ENCODE measurements at regions of chr17 and their contacts with region 1.

Region 1: DNA sequence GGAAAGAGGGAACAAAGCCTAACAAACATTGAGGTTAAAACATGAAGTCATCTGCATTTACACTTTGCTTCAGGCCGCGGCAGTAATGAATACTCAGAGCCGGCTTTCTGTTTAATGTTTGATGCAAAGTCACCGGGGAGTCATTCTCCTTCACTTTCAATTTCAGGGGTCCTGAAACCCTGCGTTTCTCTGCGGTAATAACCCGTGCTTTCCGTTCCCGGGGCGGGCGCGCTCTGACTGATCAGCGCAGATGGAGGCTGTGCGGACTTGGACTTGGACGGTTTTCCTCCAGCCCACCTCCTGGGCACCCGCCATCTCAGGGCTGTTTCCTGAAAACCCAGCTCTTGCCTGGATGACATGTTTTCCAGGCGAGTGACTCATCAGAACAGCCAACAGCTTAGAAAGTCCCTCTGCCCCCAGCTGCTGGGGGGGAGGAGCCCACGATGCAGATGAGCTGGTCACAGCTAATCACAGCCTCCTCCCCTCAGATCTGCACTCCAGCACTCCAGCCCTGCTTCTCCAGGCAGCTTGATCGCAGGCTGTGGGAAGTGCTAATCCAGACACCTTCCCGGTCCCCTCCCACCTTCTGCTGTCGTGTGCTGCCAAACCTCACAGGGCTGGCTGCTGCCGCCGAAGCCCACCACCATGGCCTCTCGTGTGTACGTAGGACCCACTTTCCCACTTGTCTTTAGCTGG is 158.6 kb upstream of the CHMP6 start:
- DNase-seq: peak; percentile 43 to 87 (median 66)
- ATAC-seq: peak; percentile 92
- H3K4me3 ChIP-seq: peak overlapping the region; percentile 55
- H3K4me3 Mint-ChIP-seq: peak overlapping the region; percentile 74
- H3K27ac ChIP-seq: peak overlapping the region; percentile 70 to 73
- H3K27ac Mint-ChIP-seq: peak overlapping the region; percentile 90
- H3K4me1 ChIP-seq: peaks cover 23% of the 10 kb centered on the region
- H3K4me1 Mint-ChIP-seq: peaks cover 35% of the 10 kb centered on the region
- H3K27me3 ChIP-seq: no peaks in the 10 kb centered on the region
- H3K27me3 Mint-ChIP-seq: no peaks in the 10 kb centered on the region
- CTCF ChIP-seq: no peak

Region 2: DNA sequence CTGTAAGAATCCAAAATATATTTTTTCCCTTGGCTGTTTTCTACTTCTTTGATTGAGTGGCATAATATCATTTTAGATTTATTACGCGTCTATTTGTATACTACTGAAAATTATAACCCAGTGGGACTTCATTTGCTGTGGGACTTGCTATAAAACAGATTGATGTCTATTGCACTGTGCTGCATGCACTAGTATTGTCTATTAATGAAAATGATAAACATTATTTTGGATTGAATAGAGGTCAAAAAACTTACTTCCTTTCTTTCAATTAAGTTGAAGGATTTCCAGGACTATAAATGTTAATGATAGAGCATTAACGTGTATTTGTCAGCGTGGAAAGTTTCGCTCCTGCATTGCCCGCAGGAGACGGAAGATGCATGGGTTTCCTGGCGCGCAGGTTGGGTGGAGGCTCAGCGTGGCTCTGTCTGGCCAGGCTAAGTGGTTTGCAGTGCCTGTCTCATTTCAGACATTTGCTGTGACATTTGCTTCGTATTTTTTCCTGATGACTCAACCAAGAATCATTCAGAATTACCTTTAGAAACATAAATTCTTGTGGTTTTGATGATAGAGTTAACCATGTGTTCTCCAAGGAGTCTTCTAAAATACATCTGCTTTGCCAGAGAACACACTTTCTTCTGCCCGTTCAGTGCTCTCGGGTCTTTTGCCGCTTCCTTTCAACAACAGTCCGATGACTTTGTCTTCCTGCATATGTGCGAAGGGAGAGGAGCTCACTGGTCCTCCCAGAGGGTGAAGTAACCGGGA is 71.7 kb before region 1 on chr17:
- CTCF ChIA-PET with region 1: no interaction called
- POLR2A ChIA-PET with region 1: no interaction called
- intact Hi-C with region 1: loop called in 1 of 2 experiments (anchors 5 kb)
- DNase-seq: peak; percentile 22 to 85 (median 68)
- ATAC-seq: peak; percentile 74
- H3K4me3 ChIP-seq: peak overlapping the region; percentile 7
- H3K4me3 Mint-ChIP-seq: peak overlapping the region; percentile 81
- H3K27ac ChIP-seq: peak overlapping the region; percentile 49 to 67
- H3K27ac Mint-ChIP-seq: peak overlapping the region; percentile 91
- H3K4me1 ChIP-seq: peaks cover 67% of the 10 kb centered on the region
- H3K4me1 Mint-ChIP-seq: peaks cover 84% of the 10 kb centered on the region
- H3K27me3 ChIP-seq: no peaks in the 10 kb centered on the region
- H3K27me3 Mint-ChIP-seq: no peaks in the 10 kb centered on the region
- CTCF ChIP-seq: no peak

Region 3: DNA sequence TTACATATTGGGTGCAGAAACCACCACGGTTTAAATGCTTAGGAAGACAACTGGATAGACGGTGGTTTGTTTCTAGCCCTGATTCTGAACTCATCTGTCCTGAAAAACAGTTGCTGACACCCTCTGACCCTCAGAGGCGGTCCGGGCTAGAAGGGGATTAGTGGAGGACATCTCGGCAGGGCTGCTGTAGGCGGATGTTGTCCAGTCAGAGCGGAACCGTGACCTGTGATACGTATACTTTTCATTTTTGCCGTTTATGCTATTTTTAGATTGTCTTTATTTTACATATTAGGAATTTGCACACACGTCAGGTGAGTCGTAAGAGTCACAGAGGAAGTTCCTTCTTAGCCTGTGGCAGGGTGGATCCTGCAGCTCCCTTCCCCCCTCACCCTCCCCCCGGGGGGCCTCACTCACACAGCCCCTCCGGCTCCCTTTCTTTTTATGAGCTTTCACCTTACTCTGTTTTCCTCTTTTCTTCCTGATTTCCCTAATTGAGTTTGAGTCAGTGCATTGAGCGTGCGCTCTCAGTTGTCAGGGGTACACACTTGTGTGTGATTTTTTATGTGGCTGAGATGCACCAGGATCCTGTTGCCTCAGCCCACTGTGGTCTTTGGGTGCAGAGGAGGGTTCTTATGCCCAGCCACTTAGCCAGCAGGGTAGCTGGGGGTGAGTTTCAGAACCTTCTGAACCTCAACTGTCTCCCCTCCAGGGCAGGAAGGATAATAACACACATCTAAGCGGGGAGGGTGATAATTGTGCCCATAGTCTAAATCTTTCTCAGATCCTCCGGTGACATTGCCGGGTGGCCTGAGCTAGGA is 52.4 kb before region 1 on chr17:
- CTCF ChIA-PET with region 1: interaction called, 3 read pairs
- POLR2A ChIA-PET with region 1: interaction called, 6 read pairs
- intact Hi-C with region 1: loop called in 1 of 2 experiments (anchors 5 kb)
- DNase-seq: peak in 3 of 14 experiments; percentile 50 to 67 (median 50)
- ATAC-seq: peak; percentile 54
- H3K4me3 ChIP-seq: peak overlapping the region; percentile 32
- H3K4me3 Mint-ChIP-seq: peak overlapping the region; percentile 36
- H3K27ac ChIP-seq: peak overlapping the region; percentile 55 to 75
- H3K27ac Mint-ChIP-seq: peak overlapping the region; percentile 85
- H3K4me1 ChIP-seq: peaks cover 58% of the 10 kb centered on the region
- H3K4me1 Mint-ChIP-seq: peaks cover 76% of the 10 kb centered on the region
- H3K27me3 ChIP-seq: no peaks in the 10 kb centered on the region
- H3K27me3 Mint-ChIP-seq: no peaks in the 10 kb centered on the region
- CTCF ChIP-seq: no peak

Region 4: GRCh38 chr17:80811181-80812105 is 21.6 kb before region 1 on chr17:
- CTCF ChIA-PET with region 1: interaction called, 4 read pairs
- POLR2A ChIA-PET with region 1: interaction called, 14 read pairs
- intact Hi-C with region 1: no loop called
- DNase-seq: peak in 5 of 14 experiments; percentile 28 to 56 (median 37)
- ATAC-seq: peak; percentile 71
- H3K4me3 ChIP-seq: no peak overlapping the region
- H3K4me3 Mint-ChIP-seq: peak overlapping the region; percentile 36
- H3K27ac ChIP-seq: peak overlapping the region; percentile 40 to 77
- H3K27ac Mint-ChIP-seq: peak overlapping the region; percentile 92
- H3K4me1 ChIP-seq: peaks cover 23% of the 10 kb centered on the region
- H3K4me1 Mint-ChIP-seq: peaks cover 48% of the 10 kb centered on the region
- H3K27me3 ChIP-seq: no peaks in the 10 kb centered on the region
- H3K27me3 Mint-ChIP-seq: no peaks in the 10 kb centered on the region
- CTCF ChIP-seq: no peak

Region 5: GRCh38 chr17:80847496-80848230 is 14.6 kb after region 1 on chr17:
- CTCF ChIA-PET with region 1: no interaction called
- POLR2A ChIA-PET with region 1: interaction called, 10 read pairs
- intact Hi-C with region 1: no loop called
- DNase-seq: peak in 13 of 14 experiments; percentile 33 to 86 (median 59)
- ATAC-seq: peak; percentile 89
- H3K4me3 ChIP-seq: peak overlapping the region; percentile 17
- H3K4me3 Mint-ChIP-seq: peak overlapping the region; percentile 73
- H3K27ac ChIP-seq: peak overlapping the region; percentile 48 to 71
- H3K27ac Mint-ChIP-seq: peak overlapping the region; percentile 93
- H3K4me1 ChIP-seq: peaks cover 41% of the 10 kb centered on the region
- H3K4me1 Mint-ChIP-seq: peaks cover 57% of the 10 kb centered on the region
- H3K27me3 ChIP-seq: no peaks in the 10 kb centered on the region
- H3K27me3 Mint-ChIP-seq: no peaks in the 10 kb centered on the region
- CTCF ChIP-seq: no peak

Region 6: DNA sequence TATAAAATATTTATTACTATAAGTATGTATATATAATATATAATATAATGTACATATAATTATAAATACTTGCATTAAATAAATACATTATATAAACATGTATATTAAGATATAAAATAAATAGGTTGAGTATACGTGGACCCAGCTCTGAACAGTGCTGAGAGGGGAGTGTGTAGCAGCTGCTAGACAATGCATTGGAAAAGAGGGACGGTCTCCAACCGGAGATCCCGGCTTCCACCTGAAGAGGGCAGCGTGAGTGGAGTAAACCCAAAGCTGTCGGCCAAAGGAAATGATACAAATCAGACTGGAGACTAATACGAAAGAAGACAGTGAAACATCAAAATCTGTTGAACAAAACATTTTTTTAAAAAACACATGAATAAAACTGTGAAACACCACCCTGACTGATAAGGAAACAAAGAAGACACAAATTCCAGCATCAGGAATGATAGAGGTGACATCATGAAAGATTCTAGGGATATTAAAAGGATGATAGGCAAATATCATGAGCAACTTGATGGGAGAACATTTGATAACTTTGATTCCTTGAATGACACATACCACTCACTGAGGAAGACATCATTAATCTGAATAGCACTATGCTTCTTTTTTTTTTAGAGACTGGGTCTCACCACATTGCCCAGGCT is 33.2 kb after region 1 on chr17:
- CTCF ChIA-PET with region 1: no interaction called
- POLR2A ChIA-PET with region 1: no interaction called
- intact Hi-C with region 1: no loop called
- DNase-seq: peak; percentile 36 to 77 (median 62)
- ATAC-seq: peak; percentile 64
- H3K4me3 ChIP-seq: no peak overlapping the region
- H3K4me3 Mint-ChIP-seq: no peak overlapping the region
- H3K27ac ChIP-seq: no peak overlapping the region
- H3K27ac Mint-ChIP-seq: peak overlapping the region; percentile 51
- H3K4me1 ChIP-seq: peaks cover 28% of the 10 kb centered on the region
- H3K4me1 Mint-ChIP-seq: peaks cover 66% of the 10 kb centered on the region
- H3K27me3 ChIP-seq: no peaks in the 10 kb centered on the region
- H3K27me3 Mint-ChIP-seq: no peaks in the 10 kb centered on the region
- CTCF ChIP-seq: peak; percentile 73

Region 7: GRCh38 chr17:81245024-81245664 is 412.1 kb after region 1 on chr17:
- CTCF ChIA-PET with region 1: no interaction called
- POLR2A ChIA-PET with region 1: no interaction called
- intact Hi-C with region 1: no loop called
- DNase-seq: no peak
- ATAC-seq: no peak
- H3K4me3 ChIP-seq: no peak overlapping the region
- H3K4me3 Mint-ChIP-seq: no peak overlapping the region
- H3K27ac ChIP-seq: no peak overlapping the region
- H3K27ac Mint-ChIP-seq: no peak overlapping the region
- H3K4me1 ChIP-seq: peaks cover 21% of the 10 kb centered on the region
- H3K4me1 Mint-ChIP-seq: peaks cover 14% of the 10 kb centered on the region
- H3K27me3 ChIP-seq: no peaks in the 10 kb centered on the region
- H3K27me3 Mint-ChIP-seq: no peaks in the 10 kb centered on the region
- CTCF ChIP-seq: no peak